ENCODE measurements at regions of chr12 and their contacts with region 1.

Region 1: DNA sequence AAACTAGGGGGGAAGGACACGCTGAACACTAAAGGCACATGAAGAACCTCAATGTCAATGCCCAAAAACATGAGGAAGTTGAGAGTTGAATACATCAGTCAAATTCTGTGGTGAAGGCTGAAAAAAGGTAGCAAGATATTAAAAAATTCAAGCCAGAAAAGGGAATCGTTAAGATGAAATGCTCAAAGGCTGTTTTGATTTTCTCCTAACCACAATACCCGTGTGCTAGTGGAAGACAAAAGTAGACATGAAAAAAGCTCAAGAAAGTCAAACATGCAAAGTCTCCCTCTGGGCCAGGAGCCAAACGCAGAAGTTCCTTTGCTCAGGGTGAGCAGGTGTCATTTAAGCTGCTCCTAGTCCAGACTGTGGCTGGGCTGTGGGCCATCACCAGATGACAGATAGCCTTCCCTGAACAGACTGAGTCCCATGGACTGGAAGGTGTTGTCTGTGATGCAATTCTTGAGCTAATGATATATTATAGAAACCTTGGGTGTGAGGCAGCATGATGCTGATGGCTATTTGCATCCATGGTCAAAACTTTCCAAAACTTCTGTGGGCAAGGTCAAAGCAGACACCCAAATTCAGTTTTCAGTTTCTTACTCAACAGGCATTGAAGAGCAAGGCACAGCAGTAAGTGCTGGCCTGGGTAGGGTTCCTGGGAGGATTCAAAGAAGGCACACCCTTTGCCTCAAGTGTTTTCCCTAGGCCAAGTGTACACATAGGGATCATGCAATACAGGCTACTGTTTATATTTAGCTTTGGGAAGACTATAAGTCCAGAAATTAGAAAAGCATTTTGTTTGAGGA is 81.6 kb downstream of the MYRFL start:
- DNase-seq: peak; percentile 90
- H3K4me3 ChIP-seq: peak overlapping the region; percentile 55
- H3K27ac ChIP-seq: peak overlapping the region; percentile 96
- H3K4me1 ChIP-seq: peaks cover 85% of the 10 kb centered on the region
- CTCF ChIP-seq: no peak

Region 2: GRCh38 chr12:69919495-69919894 is 12.9 kb after region 1 on chr12:
- CTCF ChIA-PET with region 1: no interaction called
- POLR2A ChIA-PET with region 1: interaction called, 10 read pairs
- intact Hi-C with region 1: no loop called
- DNase-seq: no peak
- H3K4me3 ChIP-seq: no peak overlapping the region
- H3K27ac ChIP-seq: no peak overlapping the region
- H3K4me1 ChIP-seq: peaks cover 22% of the 10 kb centered on the region
- CTCF ChIP-seq: no peak

Region 3: GRCh38 chr12:70049600-70050360 is 143.2 kb after region 1 on chr12:
- CTCF ChIA-PET with region 1: interaction called, 4 read pairs
- POLR2A ChIA-PET with region 1: interaction called, 4 read pairs
- intact Hi-C with region 1: loop called (anchors 2 kb)
- DNase-seq: peak; percentile 26
- H3K4me3 ChIP-seq: no peak overlapping the region
- H3K27ac ChIP-seq: no peak overlapping the region
- H3K4me1 ChIP-seq: peaks cover 40% of the 10 kb centered on the region
- CTCF ChIP-seq: no peak

Region 4: DNA sequence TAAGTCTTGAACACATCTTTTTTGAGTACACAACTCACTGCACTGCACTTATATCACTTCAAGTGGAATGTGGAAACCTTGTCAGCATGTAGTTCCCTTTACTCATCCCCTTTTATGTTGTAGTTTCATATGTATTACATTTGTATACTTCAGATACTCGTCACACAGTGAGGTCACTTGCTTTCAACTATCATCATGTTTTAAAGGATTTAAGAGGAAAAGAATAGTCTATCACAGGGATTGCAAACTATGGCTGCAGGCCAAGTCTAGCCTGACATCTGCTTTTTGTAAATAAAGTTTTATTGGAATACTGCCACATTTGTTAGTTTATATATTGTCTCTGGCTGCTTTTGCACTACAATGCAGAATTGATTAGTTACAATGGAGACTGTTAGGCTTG is 360.9 kb after region 1 on chr12:
- CTCF ChIA-PET with region 1: no interaction called
- POLR2A ChIA-PET with region 1: no interaction called
- intact Hi-C with region 1: loop called (anchors 1 kb)
- DNase-seq: peak; percentile 10
- H3K4me3 ChIP-seq: no peak overlapping the region
- H3K27ac ChIP-seq: no peak overlapping the region
- H3K4me1 ChIP-seq: peaks cover 72% of the 10 kb centered on the region
- CTCF ChIP-seq: no peak

Region 5: DNA sequence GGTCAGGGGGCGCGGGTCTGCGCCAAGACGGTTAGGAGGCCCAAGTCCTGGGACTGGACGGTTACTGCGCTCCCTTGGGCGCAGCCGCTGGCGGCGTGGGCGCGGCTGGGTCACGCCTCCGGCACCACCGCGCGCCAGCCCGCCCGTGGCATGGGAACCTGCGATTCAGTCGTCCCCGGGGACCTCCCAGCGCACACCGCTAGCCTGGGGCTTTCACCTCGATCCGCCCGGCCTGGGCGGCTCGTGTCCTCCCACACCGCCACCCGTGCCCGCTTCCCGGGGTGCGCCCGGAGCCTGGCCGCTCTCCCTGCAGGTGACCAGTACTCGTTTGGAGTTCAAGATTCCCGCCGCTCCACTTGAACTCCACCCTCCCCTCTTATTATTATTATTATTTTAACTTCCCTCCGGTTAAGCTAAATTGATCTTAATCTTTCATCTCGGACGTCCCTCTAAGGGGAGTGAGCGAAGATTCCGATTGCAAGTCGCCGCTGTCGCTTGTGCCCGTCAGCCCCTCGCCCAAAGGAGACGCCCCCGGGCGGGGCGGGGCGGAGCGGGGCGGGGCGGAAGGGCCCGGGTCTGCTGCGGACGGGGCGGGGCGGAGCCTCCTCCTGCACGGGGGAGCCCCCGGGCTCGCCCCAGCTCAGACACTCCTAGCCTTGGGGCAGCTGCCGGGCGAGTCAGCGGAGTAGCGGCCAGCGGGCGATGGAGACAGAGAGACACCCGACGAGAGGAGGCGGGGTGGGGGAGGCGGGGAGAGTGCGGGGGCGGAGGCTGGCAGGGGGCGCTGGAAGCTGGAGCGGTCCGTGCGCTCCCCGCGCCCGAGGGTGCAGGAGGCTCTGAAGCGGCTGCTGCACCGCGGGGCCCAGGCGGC is 459.3 kb after region 1 on chr12 and contains the start of gene KCNMB4:
- CTCF ChIA-PET with region 1: no interaction called
- POLR2A ChIA-PET with region 1: interaction called, 4 read pairs
- intact Hi-C with region 1: loop called (anchors 2 kb)
- DNase-seq: peak; percentile 82
- H3K4me3 ChIP-seq: peak within 1 kb of the TSS; percentile 74
- H3K27ac ChIP-seq: peak within 1 kb of the TSS; percentile 50
- H3K4me1 ChIP-seq: peaks cover 47% of the 10 kb centered on the region
- CTCF ChIP-seq: 0 out of 2 replicates have a peak, but pooled peaks have one; percentile 20
- total RNA-seq, gene KCNMB4: 3.0 and 5.8 TPM in 2 replicates

Measured in OCI-LY7 (cell line).